ENCODE measurements at regions of chr7 and their contacts with region 1.

Region 1: GRCh38 chr7:7542251-7542835 is 6.7 kb upstream of the COL28A1 start:
- DNase-seq: no peak
- ATAC-seq: no peak
- H3K4me3 ChIP-seq: no peak overlapping the region
- H3K4me3 Mint-ChIP-seq: no peak overlapping the region
- H3K27ac ChIP-seq: no peak overlapping the region
- H3K27ac Mint-ChIP-seq: no peak overlapping the region
- H3K4me1 ChIP-seq: no peaks in the 10 kb centered on the region
- H3K4me1 Mint-ChIP-seq: peaks cover 0 to 5% (median 0%) of the 10 kb centered on the region in 7 donors
- H3K27me3 ChIP-seq: no peaks in the 10 kb centered on the region
- H3K27me3 Mint-ChIP-seq: peaks cover 0 to 11% (median 5%) of the 10 kb centered on the region in 5 donors

Region 2: GRCh38 chr7:7257899-7258692 is 284.2 kb before region 1 on chr7:
- CTCF ChIA-PET with region 1: no interaction called
- POLR2A ChIA-PET with region 1: no interaction called
- intact Hi-C with region 1: loop called in 1 of 2 experiments (anchors 5 kb)
- DNase-seq: no peak
- ATAC-seq: peak; percentile 60
- H3K4me3 ChIP-seq: no peak overlapping the region
- H3K4me3 Mint-ChIP-seq: peak overlapping the region; percentile 46 to 78 (median 71)
- H3K27ac ChIP-seq: peak overlapping the region; percentile 62
- H3K27ac Mint-ChIP-seq: peak overlapping the region; percentile 70 to 92 (median 86)
- H3K4me1 ChIP-seq: peaks cover 14 to 19% of the 10 kb centered on the region in 2 donors
- H3K4me1 Mint-ChIP-seq: peaks cover 10 to 64% (median 49%) of the 10 kb centered on the region in 7 donors
- H3K27me3 ChIP-seq: no peaks in the 10 kb centered on the region
- H3K27me3 Mint-ChIP-seq: no peaks in the 10 kb centered on the region

Region 3: DNA sequence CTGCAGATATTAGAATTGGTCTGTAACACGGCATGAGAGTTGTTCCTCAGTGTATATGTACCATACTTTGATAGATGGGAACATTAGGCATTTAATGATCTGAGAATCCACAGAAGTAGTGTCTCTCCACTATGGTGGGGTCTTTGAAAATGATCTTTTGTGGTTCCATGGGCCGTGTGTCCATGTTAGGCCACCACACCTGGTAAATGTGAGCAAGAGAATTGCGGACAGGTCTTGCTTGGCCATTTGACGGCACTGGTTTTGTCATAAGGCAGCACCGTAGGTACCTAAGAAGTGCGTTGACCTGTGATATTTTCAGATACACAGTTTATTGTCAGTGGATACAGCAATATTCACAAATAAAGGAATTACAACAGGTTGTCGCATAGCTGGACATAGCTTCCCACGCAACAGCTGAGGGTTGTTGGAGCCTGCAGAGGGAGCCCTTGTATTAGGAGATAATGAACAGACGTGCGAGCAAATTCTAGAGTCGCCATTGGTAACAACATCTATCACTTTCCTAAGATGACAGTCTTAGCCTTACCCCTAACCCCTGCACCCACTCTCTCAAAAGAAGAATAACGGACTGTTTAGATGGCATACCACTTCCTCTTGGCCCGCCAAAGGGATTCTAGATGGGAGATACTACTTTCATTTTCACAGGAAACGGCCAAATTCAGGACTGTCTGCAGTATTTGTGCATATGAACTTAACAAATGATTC is 118.0 kb before region 1 on chr7:
- CTCF ChIA-PET with region 1: no interaction called
- POLR2A ChIA-PET with region 1: no interaction called
- intact Hi-C with region 1: loop called in 1 of 2 experiments (anchors 2 kb)
- DNase-seq: peak in 6 of 9 donors; percentile 8 to 44 (median 25)
- ATAC-seq: peak; percentile 73
- H3K4me3 ChIP-seq: peak overlapping the region; percentile 59
- H3K4me3 Mint-ChIP-seq: peak overlapping the region in 8 of 10 donors; percentile 74 to 89 (median 82)
- H3K27ac ChIP-seq: no peak overlapping the region
- H3K27ac Mint-ChIP-seq: peak overlapping the region in 7 of 9 donors; percentile 9 to 80 (median 48)
- H3K4me1 ChIP-seq: no peaks in the 10 kb centered on the region
- H3K4me1 Mint-ChIP-seq: peaks cover 0 to 12% (median 5%) of the 10 kb centered on the region in 7 donors
- H3K27me3 ChIP-seq: no peaks in the 10 kb centered on the region
- H3K27me3 Mint-ChIP-seq: no peaks in the 10 kb centered on the region

Region 4: GRCh38 chr7:7556847-7557246 is 14.5 kb after region 1 on chr7:
- CTCF ChIA-PET with region 1: no interaction called
- POLR2A ChIA-PET with region 1: no interaction called
- intact Hi-C with region 1: no loop called
- DNase-seq: no peak
- ATAC-seq: no peak
- H3K4me3 ChIP-seq: no peak overlapping the region
- H3K4me3 Mint-ChIP-seq: no peak overlapping the region
- H3K27ac ChIP-seq: no peak overlapping the region
- H3K27ac Mint-ChIP-seq: no peak overlapping the region
- H3K4me1 ChIP-seq: no peaks in the 10 kb centered on the region
- H3K4me1 Mint-ChIP-seq: no peaks in the 10 kb centered on the region
- H3K27me3 ChIP-seq: no peaks in the 10 kb centered on the region
- H3K27me3 Mint-ChIP-seq: peaks cover 0 to 39% (median 3%) of the 10 kb centered on the region in 5 donors

Region 5: DNA sequence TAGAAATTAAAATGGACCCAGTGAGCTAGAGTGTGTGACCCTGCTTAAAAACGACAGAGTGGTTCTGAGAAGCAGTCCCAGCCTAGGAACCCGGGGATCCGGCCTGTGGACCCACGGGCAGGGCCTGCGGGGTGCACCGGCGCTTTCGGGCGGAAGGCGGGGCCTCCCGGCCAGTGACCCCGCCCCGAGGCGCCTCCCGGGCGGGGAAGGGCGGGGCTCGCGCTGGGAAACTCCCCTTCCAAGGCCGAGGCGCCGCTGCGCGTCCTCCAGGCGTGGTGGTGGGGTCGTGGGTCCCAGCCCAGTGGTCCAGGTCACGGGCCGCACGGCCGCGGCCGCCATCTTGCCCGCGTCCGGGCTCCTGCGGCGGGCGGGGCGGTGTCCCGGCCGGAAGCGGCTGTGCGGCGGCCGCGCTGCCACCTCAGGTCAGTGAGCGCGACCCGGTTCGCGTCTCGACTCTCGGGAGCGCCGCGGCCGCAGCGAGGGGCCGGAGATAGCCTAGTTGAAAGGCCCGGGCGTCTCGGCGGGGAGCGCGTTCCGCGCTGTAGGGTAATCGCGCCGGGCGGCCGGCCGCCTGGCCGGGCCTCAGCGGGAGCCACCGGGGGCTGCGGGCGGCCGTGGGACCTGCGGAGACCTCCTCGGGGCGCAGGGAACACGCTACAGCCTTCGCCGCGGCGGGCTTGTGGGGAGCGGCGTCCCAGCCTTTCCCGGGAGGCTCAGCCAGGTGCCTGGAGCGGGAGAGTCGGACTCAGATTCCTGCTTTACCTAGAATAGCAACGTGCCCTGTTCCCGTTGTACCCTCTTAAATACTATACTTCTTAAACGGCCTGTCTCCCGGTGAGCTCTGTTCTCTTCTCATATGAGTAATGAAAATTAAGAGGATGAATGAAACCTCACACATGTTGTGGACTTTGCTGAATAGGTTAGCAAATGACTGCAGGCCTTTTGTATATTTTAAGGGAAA is 24.6 kb after region 1 on chr7 and contains the start of gene MIOS:
- CTCF ChIA-PET with region 1: no interaction called
- POLR2A ChIA-PET with region 1: no interaction called
- intact Hi-C with region 1: no loop called
- DNase-seq: peak; percentile 73 to 88 (median 83)
- ATAC-seq: peak; percentile 95
- H3K4me3 ChIP-seq: peak within 1 kb of the TSS; percentile 77
- H3K4me3 Mint-ChIP-seq: peak within 1 kb of the TSS in 9 of 10 donors; percentile 75 to 92 (median 86)
- H3K27ac ChIP-seq: peak within 1 kb of the TSS; percentile 98
- H3K27ac Mint-ChIP-seq: peak within 1 kb of the TSS; percentile 80 to 91 (median 85)
- H3K4me1 ChIP-seq: peaks cover 27 to 29% of the 10 kb centered on the region in 2 donors
- H3K4me1 Mint-ChIP-seq: peaks cover 21 to 41% (median 37%) of the 10 kb centered on the region in 7 donors
- H3K27me3 ChIP-seq: no peaks in the 10 kb centered on the region
- H3K27me3 Mint-ChIP-seq: no peaks in the 10 kb centered on the region
- total RNA-seq, gene MIOS: 24.3 to 31.7 (median 28.7) TPM

Region 6: GRCh38 chr7:8172372-8173354 is 630.3 kb after region 1 on chr7:
- CTCF ChIA-PET with region 1: no interaction called
- POLR2A ChIA-PET with region 1: no interaction called
- intact Hi-C with region 1: no loop called
- DNase-seq: no peak
- ATAC-seq: no peak
- H3K4me3 ChIP-seq: no peak overlapping the region
- H3K4me3 Mint-ChIP-seq: no peak overlapping the region
- H3K27ac ChIP-seq: no peak overlapping the region
- H3K27ac Mint-ChIP-seq: peak overlapping the region in 2 of 9 donors; percentile 47 to 96
- H3K4me1 ChIP-seq: peaks cover 31 to 32% of the 10 kb centered on the region in 2 donors
- H3K4me1 Mint-ChIP-seq: peaks cover 26 to 48% (median 44%) of the 10 kb centered on the region in 7 donors
- H3K27me3 ChIP-seq: no peaks in the 10 kb centered on the region
- H3K27me3 Mint-ChIP-seq: peaks cover 0 to 21% (median 0%) of the 10 kb centered on the region in 5 donors

Region 7: DNA sequence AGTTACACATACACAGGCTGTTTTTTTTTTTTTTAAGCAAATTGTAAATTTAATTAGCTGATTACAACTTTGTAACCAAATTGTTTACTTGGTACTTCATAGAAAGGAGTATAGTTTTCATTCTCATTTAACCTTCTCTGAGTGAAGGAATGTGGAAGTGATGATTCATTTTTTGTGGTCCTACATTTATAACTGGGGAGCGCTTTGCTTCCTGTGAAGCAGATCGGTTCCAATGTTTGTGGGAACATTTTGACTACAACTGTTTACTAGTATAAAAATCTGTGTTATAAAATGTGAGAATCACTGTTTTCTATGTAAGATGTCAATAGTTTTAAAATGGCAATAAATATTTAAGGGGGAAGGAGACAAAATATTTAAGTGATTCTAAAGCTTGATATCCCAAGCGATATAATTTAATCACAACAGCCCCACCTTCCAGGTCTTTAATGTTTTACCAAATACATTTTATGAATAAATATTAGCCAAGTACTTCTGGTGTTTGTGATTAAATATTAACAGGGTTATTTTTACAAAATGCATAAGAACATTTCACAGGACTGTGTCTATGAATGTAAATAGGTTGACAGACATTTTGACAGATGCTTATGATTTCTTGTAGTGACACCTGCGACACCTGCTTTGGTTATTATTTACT is 948.2 kb after region 1 on chr7:
- CTCF ChIA-PET with region 1: no interaction called
- POLR2A ChIA-PET with region 1: no interaction called
- intact Hi-C with region 1: no loop called
- DNase-seq: no peak
- ATAC-seq: no peak
- H3K4me3 ChIP-seq: no peak overlapping the region
- H3K4me3 Mint-ChIP-seq: no peak overlapping the region
- H3K27ac ChIP-seq: no peak overlapping the region
- H3K27ac Mint-ChIP-seq: no peak overlapping the region
- H3K4me1 ChIP-seq: no peaks in the 10 kb centered on the region
- H3K4me1 Mint-ChIP-seq: no peaks in the 10 kb centered on the region
- H3K27me3 ChIP-seq: no peaks in the 10 kb centered on the region
- H3K27me3 Mint-ChIP-seq: peaks cover 0 to 10% (median 0%) of the 10 kb centered on the region in 5 donors

Measured in naive thymus-derived CD4-positive, alpha-beta T cell (primary cell).